Gastrocnemius medialis (tissue), 4 donors: ENCODE measurements at regions of chr7 and their contacts with region 1.

Region 1: DNA sequence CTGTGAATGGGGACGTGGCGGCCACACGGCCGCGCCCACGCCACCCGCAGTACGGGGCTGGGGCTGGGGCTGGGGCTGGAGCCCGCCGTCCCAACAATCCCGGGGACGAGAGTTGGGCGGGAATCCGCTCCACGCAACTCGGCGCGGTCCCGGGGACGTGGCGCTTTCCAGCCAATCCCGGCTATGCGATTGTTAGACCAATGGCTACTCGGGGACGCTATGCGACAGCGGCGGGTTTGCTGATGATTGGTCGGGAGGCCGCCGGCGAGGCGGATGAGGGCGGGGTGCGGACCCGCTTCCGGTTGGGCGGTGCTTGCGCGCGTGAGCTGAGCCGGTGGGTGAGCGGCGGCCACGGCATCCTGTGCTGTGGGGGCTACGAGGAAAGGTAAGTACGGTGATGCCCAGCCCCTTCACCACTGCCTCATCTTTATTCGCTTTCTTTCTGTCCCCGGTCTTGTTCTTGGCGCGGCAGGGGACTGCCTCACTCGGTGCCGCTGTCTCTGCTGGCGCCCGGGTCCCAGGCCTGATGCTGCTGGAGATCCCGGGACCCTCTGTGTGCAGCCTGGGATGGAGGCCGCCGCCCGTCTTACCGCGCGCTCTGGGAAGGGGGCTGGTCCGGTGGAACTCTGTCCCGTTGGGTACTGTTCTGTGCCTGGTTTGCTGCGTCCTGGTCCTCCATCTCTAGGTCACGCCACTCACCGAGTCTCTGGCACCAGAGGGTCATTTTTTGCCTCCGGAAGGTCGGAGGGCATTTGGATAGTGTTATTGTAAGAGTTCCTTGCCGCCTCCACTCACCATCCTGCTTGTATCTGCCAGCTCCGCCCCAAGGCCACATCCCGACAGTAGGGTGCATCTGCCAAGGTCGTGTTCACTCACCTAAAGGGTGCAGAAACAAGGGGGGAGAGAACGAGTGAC is at the start of gene CALU:
- DNase-seq: peak; percentile 97 to 98
- ATAC-seq: peak; percentile 96 to 97
- H3K4me3 ChIP-seq: peak within 1 kb of the TSS; percentile 82 to 100 (median 91)
- H3K27ac ChIP-seq: peak within 1 kb of the TSS; percentile 92 to 99 (median 95)
- H3K4me1 ChIP-seq: peaks cover 35 to 40% of the 10 kb centered on the region in 2 donors
- H3K27me3 ChIP-seq: no peaks in the 10 kb centered on the region
- CTCF ChIP-seq: no peak
- POLR2A ChIP-seq: peak; percentile 95 to 97
- total RNA-seq, gene CALU: 40.1 to 115 (median 90.6) TPM

Region 2: GRCh38 chr7:128770233-128770632 is 30.9 kb after region 1 on chr7:
- in situ Hi-C with region 1: no loop called
- intact Hi-C with region 1: no loop called
- DNase-seq: no peak
- ATAC-seq: no peak
- H3K4me3 ChIP-seq: no peak overlapping the region
- H3K27ac ChIP-seq: no peak overlapping the region
- H3K4me1 ChIP-seq: peaks cover 4 to 21% of the 10 kb centered on the region in 2 donors
- H3K27me3 ChIP-seq: no peaks in the 10 kb centered on the region
- CTCF ChIP-seq: no peak
- POLR2A ChIP-seq: no peak

Region 3: GRCh38 chr7:128783143-128783861 is 44.0 kb after region 1 on chr7:
- in situ Hi-C with region 1: no loop called
- intact Hi-C with region 1: no loop called
- DNase-seq: peak in 1 of 2 donors; percentile 50
- ATAC-seq: peak in 1 of 2 donors; percentile 70
- H3K4me3 ChIP-seq: no peak overlapping the region
- H3K27ac ChIP-seq: no peak overlapping the region
- H3K4me1 ChIP-seq: no peaks in the 10 kb centered on the region
- H3K27me3 ChIP-seq: no peaks in the 10 kb centered on the region
- CTCF ChIP-seq: no peak
- POLR2A ChIP-seq: no peak

Region 4: DNA sequence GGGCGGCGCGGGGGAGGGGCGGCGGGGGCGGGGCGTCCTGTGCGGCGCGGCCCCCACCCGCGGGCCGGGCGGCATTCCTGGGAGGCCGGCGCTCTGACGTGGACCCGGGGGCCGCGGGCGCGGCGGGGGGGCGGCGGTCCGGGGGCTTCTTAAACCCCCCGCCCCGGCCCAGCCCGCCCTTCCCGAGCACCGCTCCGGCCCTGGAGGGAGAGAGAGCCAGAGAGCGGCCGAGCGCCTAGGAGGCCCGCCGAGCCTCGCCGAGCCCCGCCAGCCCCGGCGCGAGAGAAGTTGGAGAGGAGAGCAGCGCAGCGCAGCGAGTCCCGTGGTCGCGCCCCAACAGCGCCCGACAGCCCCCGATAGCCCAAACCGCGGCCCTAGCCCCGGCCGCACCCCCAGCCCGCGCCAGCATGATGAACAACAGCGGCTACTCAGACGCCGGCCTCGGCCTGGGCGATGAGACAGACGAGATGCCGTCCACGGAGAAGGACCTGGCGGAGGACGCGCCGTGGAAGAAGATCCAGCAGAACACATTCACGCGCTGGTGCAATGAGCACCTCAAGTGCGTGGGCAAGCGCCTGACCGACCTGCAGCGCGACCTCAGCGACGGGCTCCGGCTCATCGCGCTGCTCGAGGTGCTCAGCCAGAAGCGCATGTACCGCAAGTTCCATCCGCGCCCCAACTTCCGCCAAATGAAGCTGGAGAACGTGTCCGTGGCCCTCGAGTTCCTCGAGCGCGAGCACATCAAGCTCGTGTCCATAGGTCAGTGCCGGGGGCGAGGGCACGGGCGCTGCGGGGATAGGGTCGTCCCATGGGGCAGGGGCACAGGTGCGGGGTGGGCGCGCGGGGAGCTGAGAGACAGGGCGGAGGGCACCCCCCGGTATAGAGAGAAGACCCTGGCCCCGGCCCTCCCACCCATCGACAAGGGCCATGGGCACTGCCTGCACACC is 91.2 kb after region 1 on chr7 and contains the start of gene FLNC:
- in situ Hi-C with region 1: no loop called
- intact Hi-C with region 1: loop called (anchors 5 kb)
- DNase-seq: peak in 1 of 2 donors; percentile 80
- ATAC-seq: peak in 1 of 2 donors; percentile 1
- H3K4me3 ChIP-seq: peak within 1 kb of the TSS; percentile 69 to 92 (median 84)
- H3K27ac ChIP-seq: peak within 1 kb of the TSS; percentile 92 to 99 (median 98)
- H3K4me1 ChIP-seq: peaks cover 58 to 80% of the 10 kb centered on the region in 2 donors
- H3K27me3 ChIP-seq: no peaks in the 10 kb centered on the region
- CTCF ChIP-seq: no peak
- POLR2A ChIP-seq: peak; percentile 93 to 96
- total RNA-seq, gene FLNC: 1,071 to 4,398 (median 2,381) TPM

Region 5: DNA sequence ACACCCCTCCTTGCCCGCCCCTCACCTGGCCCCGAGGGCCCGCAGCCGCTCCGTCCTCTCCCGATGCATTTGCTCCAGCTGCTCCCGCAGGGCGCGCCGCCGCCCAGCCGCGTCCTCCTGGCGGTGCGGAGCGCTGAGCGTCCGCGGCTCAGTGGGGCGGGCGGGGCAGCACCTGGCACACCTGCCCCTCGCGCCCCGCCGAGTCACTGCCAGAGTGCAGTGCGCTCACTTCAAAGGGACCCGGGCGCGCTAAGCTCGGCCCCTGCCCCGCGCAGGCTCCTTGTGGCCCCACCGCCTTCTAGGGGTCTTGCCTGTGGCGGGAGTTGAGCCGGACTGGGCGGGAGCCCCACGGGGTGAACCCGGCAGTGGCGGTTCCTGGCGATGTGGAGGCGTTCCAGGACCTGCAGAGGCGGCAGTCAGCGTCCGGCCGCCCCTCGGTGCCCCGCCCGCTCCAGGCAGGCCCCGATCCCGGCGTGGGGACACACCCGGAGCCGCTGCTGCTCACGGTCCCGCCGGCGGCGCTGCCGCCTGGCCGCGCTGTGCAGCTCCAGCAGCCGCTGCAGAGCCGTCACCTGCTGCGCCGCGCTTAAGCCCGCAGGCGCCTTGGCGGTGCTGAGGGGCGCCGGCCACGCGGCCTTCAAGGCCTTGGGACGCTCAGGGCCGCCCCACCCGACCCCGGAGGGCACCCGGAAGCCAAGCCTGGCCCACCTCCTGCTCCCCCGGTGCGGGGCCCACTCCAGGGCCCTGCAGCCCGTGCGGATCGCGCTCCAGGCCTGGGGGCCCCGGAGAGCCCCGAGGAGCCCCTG is 130.0 kb after region 1 on chr7:
- in situ Hi-C with region 1: loop called in 1 of 4 experiments (anchors 10 kb)
- intact Hi-C with region 1: loop called (anchors 5 kb)
- DNase-seq: peak in 1 of 2 donors; percentile 48
- ATAC-seq: peak; percentile 32 to 64
- H3K4me3 ChIP-seq: peak overlapping the region; percentile 48 to 79 (median 64)
- H3K27ac ChIP-seq: peak overlapping the region; percentile 34 to 53 (median 42)
- H3K4me1 ChIP-seq: peaks cover 10 to 12% of the 10 kb centered on the region in 2 donors
- H3K27me3 ChIP-seq: no peaks in the 10 kb centered on the region
- CTCF ChIP-seq: peak in 3 of 5 experiments; percentile 14 to 54 (median 36)
- POLR2A ChIP-seq: no peak

Region 6: DNA sequence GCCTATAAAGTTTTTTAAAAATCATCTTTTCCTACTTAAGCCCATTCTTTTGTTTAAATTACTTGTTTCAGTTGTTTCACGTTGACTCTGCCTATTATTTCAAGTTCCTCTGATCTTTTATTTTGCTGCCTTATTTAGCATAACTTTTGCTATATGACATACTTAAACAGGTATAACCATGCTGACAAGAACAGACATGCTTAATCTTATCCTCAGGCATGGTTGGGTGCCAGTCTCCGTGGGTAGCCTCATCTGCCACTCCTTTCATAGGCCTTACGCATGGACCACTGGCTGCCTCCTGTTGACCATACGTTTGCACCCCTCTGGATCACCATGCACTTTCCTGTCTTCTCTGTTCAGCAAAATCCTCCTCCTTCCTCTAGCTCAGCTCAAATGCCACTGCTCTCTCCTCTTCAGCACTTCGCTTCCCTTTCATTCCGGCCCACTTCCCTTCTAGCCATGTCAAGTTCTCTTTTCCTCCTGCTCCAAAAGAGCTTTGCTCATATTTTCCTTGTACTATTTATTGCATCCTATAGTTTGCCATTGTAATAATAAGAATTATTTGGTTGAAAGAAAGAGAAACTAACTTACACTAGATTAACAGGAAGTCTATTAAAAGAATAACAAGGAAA is 395.2 kb after region 1 on chr7:
- in situ Hi-C with region 1: no loop called
- intact Hi-C with region 1: no loop called
- DNase-seq: no peak
- ATAC-seq: no peak
- H3K4me3 ChIP-seq: no peak overlapping the region
- H3K27ac ChIP-seq: no peak overlapping the region
- H3K4me1 ChIP-seq: no peaks in the 10 kb centered on the region
- H3K27me3 ChIP-seq: no peaks in the 10 kb centered on the region
- CTCF ChIP-seq: no peak
- POLR2A ChIP-seq: no peak